Endothelial cell of umbilical vein (primary cell): ENCODE measurements at regions of chr2 and their contacts with region 1.

Region 1: GRCh38 chr2:102473020-102473419 is at the start of gene SLC9A4:
- DNase-seq: peak; percentile 62
- H3K4me3 ChIP-seq: no peak within 1 kb of the TSS
- H3K27ac ChIP-seq: no peak within 1 kb of the TSS
- H3K4me1 ChIP-seq: no peaks in the 10 kb centered on the region
- H3K27me3 ChIP-seq: peaks cover 31 to 49% of the 10 kb centered on the region in 2 experiments
- CTCF ChIP-seq: peak; percentile 76 to 80
- POLR2A ChIP-seq: no peak
- total RNA-seq, gene SLC9A4: 0.07 TPM in 1 of 2 replicates, not detected in the other

Region 2: DNA sequence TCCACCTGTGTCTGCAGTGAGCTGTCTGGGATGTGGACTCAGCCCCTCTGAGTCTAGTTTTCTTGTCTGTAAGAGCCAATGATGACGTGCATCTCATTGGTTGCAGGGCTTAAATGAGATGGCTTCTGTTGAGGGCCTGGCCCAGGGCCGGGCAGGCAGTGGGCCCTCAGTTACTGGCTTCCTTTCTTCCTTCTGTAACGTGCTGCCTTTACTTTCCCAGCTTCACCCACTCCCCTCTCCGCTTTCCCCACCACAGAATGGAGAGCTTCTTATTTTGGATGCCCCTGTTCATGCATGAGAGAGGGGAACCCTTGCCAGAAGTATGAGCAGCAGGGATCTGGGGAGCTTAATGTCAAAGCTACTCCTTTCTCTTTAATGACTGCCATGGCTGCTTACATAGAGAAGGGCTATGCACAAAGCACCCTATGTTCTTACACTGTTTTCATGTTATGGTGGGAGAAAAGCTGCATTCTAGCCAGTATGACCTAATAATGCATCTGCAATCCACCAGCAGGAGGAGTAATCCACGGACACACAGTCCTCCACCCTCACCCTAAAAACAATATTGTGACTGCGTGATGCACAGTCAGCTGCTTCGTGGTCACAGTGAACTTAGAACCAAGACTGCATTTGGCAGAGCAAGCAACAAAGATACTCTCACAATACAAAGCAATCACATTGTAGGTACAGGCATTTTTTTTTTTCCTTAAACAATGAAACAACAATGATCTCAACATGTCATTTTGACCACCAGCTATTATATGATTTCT is 1122.9 kb before region 1 on chr2:
- CTCF ChIA-PET with region 1: no interaction called
- POLR2A ChIA-PET with region 1: no interaction called
- dilution Hi-C with region 1: no loop called
- intact Hi-C with region 1: no loop called
- DNase-seq: no peak
- H3K4me3 ChIP-seq: no peak overlapping the region
- H3K27ac ChIP-seq: no peak overlapping the region
- H3K4me1 ChIP-seq: no peaks in the 10 kb centered on the region
- H3K27me3 ChIP-seq: no peaks in the 10 kb centered on the region
- CTCF ChIP-seq: peak; percentile 10 to 33
- POLR2A ChIP-seq: no peak

Region 3: DNA sequence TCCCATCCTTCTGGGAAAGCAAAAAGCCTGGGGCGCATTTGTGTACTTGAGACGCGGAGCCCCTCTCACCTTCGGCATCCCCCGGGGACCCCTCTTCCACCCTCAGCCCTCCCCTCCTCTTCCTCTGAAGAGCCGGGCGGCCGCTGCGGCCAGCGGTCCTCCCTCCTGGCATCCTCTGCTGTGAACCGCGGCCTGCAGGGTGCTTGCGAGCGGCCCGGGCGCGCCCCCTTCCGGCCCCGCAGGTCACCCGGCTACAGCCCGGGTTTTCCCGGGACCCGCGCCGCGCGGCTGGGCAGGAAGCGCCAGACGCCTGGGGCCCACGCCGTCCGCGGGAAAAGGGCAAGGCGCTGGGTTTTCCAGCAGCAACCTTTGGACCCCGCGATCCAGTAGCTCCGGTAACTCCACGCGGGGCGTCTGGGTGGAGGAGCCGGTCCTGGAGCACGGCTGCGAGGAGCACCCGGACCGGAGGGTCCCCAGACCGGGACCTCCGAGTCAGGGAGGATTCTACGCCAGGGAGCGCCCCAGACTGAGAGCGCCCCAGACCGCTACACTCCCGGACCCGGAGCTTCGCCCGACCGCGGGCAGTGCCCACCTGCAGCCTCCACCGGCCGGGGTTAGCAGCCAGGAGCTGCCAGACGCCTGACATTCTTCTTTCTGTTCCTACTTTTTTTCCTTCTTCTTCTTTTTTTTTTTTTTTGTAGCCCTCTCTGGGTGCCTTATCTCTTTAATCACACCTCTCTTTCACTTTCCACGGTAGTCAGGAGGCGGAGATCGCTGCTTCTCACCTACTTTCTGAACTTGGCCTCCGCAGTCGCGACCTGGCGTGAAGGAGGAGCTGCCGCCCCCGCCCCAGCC is 117.3 kb before region 1 on chr2 and contains the start of gene IL18R1:
- CTCF ChIA-PET with region 1: no interaction called
- POLR2A ChIA-PET with region 1: no interaction called
- dilution Hi-C with region 1: no loop called
- intact Hi-C with region 1: no loop called
- DNase-seq: peak; percentile 71
- H3K4me3 ChIP-seq: peak within 1 kb of the TSS; percentile 70 to 88 (median 79)
- H3K27ac ChIP-seq: peak within 1 kb of the TSS; percentile 63
- H3K4me1 ChIP-seq: peaks cover 13% of the 10 kb centered on the region
- H3K27me3 ChIP-seq: no peaks in the 10 kb centered on the region
- CTCF ChIP-seq: peak; percentile 72 to 84
- POLR2A ChIP-seq: no peak
- total RNA-seq, gene IL18R1: 3.6 and 4.0 TPM in 2 replicates

Region 4: GRCh38 chr2:102410952-102411351 is 62.1 kb before region 1 on chr2:
- CTCF ChIA-PET with region 1: no interaction called
- POLR2A ChIA-PET with region 1: no interaction called
- dilution Hi-C with region 1: no loop called
- intact Hi-C with region 1: no loop called
- DNase-seq: no peak
- H3K4me3 ChIP-seq: no peak overlapping the region
- H3K27ac ChIP-seq: no peak overlapping the region
- H3K4me1 ChIP-seq: no peaks in the 10 kb centered on the region
- H3K27me3 ChIP-seq: peaks cover 0 to 2% of the 10 kb centered on the region in 2 experiments
- CTCF ChIP-seq: no peak
- POLR2A ChIP-seq: no peak

Region 5: DNA sequence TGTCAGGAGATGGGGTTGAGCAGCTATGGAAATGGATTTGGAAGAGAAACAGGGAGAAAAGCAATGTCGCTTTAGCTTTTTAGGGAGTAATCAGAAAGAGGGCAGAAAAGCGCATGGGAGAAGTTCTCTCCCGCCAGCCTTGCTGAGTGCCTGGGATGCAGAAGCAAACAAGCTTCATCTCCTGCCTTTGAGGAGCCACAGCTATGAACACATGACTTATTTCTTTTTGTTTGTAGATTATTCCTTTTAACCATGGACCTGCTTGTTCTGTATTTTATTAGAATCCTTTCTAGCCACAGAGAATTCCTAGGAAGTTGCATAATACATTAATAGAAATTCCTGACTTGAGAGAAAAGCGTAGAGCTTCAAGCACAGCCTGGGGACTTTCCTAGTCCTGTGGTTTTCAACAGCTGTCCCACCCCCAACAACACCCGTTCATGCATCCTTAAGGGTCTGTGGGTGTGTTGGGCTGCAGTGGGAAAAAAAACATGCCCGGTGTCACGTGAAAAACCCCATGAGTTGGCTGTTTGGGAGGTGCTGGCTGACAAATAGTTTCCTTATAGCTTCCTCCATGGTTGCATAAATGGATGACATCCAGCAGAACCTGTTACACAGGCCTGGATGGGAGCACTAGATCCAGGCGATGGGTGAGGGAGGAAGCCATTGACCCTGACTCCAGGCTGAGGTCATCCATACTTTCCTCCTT is 14.9 kb after region 1 on chr2:
- CTCF ChIA-PET with region 1: interaction called, 24 read pairs
- POLR2A ChIA-PET with region 1: no interaction called
- dilution Hi-C with region 1: no loop called
- intact Hi-C with region 1: no loop called
- DNase-seq: peak; percentile 4
- H3K4me3 ChIP-seq: no peak overlapping the region
- H3K27ac ChIP-seq: no peak overlapping the region
- H3K4me1 ChIP-seq: no peaks in the 10 kb centered on the region
- H3K27me3 ChIP-seq: peaks cover 9 to 11% of the 10 kb centered on the region in 2 experiments
- CTCF ChIP-seq: no peak
- POLR2A ChIP-seq: no peak

Region 6: DNA sequence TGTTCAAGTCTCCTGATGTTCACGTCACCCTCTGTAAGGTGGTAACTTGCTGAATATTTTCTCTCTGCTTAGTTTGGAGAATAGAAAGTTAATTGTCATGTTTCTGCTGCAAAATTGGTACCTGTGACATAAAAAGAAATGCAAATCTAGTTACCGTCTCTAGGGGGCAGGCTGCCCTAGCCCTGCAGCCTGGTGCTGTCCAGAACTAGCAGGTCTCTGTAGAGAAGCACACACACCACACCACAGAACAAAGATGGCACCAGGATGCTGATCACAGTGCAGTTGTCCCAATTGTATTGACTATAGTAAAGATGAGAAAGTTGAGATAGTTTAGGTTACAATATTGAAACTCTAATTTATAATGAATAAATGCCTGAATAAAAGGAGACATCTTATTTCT is 47.0 kb after region 1 on chr2:
- CTCF ChIA-PET with region 1: interaction called, 13 read pairs
- POLR2A ChIA-PET with region 1: no interaction called
- dilution Hi-C with region 1: no loop called
- intact Hi-C with region 1: no loop called
- DNase-seq: peak; percentile 24
- H3K4me3 ChIP-seq: no peak overlapping the region
- H3K27ac ChIP-seq: no peak overlapping the region
- H3K4me1 ChIP-seq: no peaks in the 10 kb centered on the region
- H3K27me3 ChIP-seq: peaks cover 0 to under 1% of the 10 kb centered on the region in 2 experiments
- CTCF ChIP-seq: peak; percentile 54 to 66
- POLR2A ChIP-seq: no peak

Region 7: DNA sequence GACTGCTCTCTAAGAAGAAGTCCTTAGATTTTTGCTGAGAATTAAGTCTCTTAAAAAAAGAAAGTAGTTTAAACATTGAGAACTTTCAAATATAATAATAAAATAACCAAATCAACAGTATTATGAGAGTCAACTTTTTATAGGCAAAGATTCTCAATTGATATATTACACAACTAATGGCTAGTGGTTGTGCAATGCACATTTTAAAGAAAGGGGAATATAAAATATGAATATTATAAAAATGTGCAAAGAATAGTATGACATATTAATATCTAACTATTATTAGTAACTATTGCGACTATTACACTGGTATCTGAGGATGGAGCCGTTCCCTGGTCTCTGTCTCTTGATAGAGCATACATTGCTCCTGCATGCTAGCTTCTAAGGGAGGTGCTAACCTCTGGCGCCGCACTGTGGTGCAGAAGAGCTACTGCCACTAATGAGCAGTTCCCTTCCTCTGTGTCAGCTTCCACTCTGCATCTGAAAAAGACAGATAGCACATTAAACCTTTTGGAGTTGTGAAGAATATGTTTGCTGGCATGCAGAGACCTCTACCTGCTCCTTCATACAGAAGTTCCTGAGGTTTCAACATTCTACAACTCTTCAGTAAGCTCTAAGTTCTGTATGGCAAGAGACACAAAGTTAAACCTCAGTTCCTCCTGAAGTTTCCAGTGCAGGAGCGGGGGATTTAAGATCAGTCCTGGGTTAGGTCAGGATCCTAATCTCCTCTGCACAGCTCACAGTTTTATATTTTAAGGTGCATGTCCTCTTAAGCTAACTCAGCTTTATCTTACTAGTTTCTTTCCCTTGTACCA is 142.8 kb after region 1 on chr2:
- CTCF ChIA-PET with region 1: interaction called, 218 read pairs
- POLR2A ChIA-PET with region 1: no interaction called
- dilution Hi-C with region 1: no loop called
- intact Hi-C with region 1: loop called (anchors 1 kb)
- DNase-seq: peak; percentile 45
- H3K4me3 ChIP-seq: no peak overlapping the region
- H3K27ac ChIP-seq: no peak overlapping the region
- H3K4me1 ChIP-seq: peaks cover 2% of the 10 kb centered on the region
- H3K27me3 ChIP-seq: peaks cover 35 to 74% of the 10 kb centered on the region in 2 experiments
- CTCF ChIP-seq: peak; percentile 82 to 89
- POLR2A ChIP-seq: no peak

Region 8: GRCh38 chr2:102806250-102806837 is 333.3 kb after region 1 on chr2:
- CTCF ChIA-PET with region 1: interaction called, 11 read pairs
- POLR2A ChIA-PET with region 1: no interaction called
- dilution Hi-C with region 1: no loop called
- intact Hi-C with region 1: no loop called
- DNase-seq: peak; percentile 79
- H3K4me3 ChIP-seq: no peak overlapping the region
- H3K27ac ChIP-seq: no peak overlapping the region
- H3K4me1 ChIP-seq: no peaks in the 10 kb centered on the region
- H3K27me3 ChIP-seq: no peaks in the 10 kb centered on the region
- CTCF ChIP-seq: peak; percentile 83 to 88
- POLR2A ChIP-seq: no peak